ENCODE measurements at regions of chr18 and their contacts with region 1.

Region 1: GRCh38 chr18:12657684-12658425 is at the start of gene SPIRE1:
- DNase-seq: peak; percentile 29
- ATAC-seq: peak; percentile 83
- H3K4me3 ChIP-seq: peak within 1 kb of the TSS; percentile 78 to 86 (median 85)
- H3K27ac ChIP-seq: peak within 1 kb of the TSS; percentile 23
- H3K4me1 ChIP-seq: peaks cover 21% of the 10 kb centered on the region
- H3K27me3 ChIP-seq: no peaks in the 10 kb centered on the region
- CTCF ChIP-seq: peak; percentile 38
- EP300 ChIP-seq: no peak
- POLR2A ChIP-seq: peak in 1 of 2 experiments; percentile 54; a peak in 2 of 4 replicates
- RAD21 ChIP-seq: no peak
- total RNA-seq, gene SPIRE1: 21.3 and 28.1 TPM in 2 replicates

Region 2: DNA sequence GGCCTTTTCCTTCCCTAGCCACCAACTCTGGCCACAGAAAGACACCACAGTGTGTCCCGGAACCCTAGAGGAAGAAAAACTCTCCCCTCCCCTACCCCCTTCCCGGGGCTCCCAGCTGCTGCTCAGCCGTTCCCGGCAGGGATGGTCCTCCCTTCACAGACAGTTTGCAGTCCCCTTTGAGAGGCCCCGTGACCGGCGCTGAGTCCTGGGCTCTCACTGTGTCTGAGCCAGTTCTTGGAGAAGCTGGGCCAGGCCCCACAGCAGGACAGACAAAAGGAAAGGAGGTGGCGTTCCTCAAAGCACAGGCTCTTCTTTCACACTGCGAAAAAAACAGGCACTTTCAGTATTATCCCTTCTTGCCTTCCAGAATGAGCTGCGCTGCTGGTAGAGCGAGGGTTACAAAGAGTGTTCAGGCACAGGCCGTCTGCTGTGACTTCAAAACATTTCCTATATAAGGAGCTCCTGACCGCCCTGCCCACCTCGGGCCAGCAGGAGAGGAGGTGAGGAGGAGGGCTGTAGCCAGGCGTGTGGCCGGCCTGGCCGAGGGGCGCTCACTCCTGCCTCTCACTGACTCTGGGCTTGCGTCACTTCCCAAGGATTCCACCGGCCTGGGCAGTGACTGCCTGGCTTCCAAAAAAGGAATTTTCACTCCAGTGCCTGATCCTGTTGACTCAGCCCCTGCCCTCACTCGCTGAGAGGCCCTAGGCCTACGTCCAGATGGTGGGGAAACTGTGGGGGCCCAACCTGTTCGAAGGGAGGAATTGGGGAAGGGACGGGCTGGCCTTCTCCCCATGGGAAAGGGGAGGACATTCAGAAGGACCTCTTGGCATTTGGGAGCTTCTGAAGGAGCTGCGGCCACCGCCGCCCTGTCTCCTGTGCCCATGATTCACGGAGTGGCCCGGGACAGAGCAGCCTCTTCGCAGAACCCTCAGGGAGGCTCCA is 378.8 kb before region 1 on chr18:
- CTCF ChIA-PET with region 1: no interaction called
- POLR2A ChIA-PET with region 1: no interaction called
- in situ Hi-C with region 1: no loop called
- intact Hi-C with region 1: loop called (anchors 5 kb)
- DNase-seq: peak; percentile 74
- ATAC-seq: peak; percentile 93
- H3K4me3 ChIP-seq: peak overlapping the region; percentile 32 to 61 (median 53)
- H3K27ac ChIP-seq: no peak overlapping the region
- H3K4me1 ChIP-seq: peaks cover 33% of the 10 kb centered on the region
- H3K27me3 ChIP-seq: peaks cover 0 to 14% of the 10 kb centered on the region in 2 experiments; a peak in 1 of 5 replicates
- CTCF ChIP-seq: peak; percentile 26; the same call in 1 of the 2 replicates
- EP300 ChIP-seq: no peak
- POLR2A ChIP-seq: peak in 1 of 2 experiments; percentile 59; a peak in 2 of 4 replicates
- RAD21 ChIP-seq: no peak

Region 3: GRCh38 chr18:12327510-12328178 is 330.2 kb before region 1 on chr18:
- CTCF ChIA-PET with region 1: interaction called, 3 read pairs
- POLR2A ChIA-PET with region 1: no interaction called
- in situ Hi-C with region 1: no loop called
- intact Hi-C with region 1: loop called (anchors 5 kb)
- DNase-seq: peak; percentile 69
- ATAC-seq: peak; percentile 95
- H3K4me3 ChIP-seq: no peak overlapping the region
- H3K27ac ChIP-seq: no peak overlapping the region
- H3K4me1 ChIP-seq: no peaks in the 10 kb centered on the region; the same call in 1 of the 2 replicates
- H3K27me3 ChIP-seq: no peaks in the 10 kb centered on the region
- CTCF ChIP-seq: peak; percentile 85
- EP300 ChIP-seq: no peak
- POLR2A ChIP-seq: no peak
- RAD21 ChIP-seq: peak; percentile 64; the same call in 1 of the 2 replicates

Region 4: DNA sequence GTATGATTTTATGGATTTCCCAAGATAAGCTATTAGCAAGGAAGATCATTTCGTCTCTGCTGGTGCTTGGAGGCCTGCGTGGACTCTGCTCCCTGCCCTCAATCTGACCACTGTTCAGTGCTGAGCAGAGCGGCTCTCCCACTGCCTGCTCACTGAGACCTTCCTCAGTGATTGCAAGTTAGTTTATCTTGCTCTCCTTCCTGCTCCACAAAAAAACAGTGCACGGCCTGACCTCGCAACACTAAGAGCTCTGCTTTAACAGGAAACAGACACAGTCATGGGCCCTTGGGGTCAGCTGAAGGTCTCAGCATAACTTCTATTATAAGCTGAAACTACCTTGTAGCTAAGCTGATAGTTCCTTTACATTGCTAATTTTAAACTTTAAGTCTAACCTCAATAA is 197.0 kb before region 1 on chr18:
- CTCF ChIA-PET with region 1: no interaction called
- POLR2A ChIA-PET with region 1: no interaction called
- in situ Hi-C with region 1: no loop called
- intact Hi-C with region 1: loop called (anchors 5 kb)
- DNase-seq: peak; percentile 67
- ATAC-seq: peak; percentile 100
- H3K4me3 ChIP-seq: peak overlapping the region in 1 of 3 experiments; percentile 4; a peak in 1 of 6 replicates
- H3K27ac ChIP-seq: peak overlapping the region; percentile 57
- H3K4me1 ChIP-seq: peaks cover 24% of the 10 kb centered on the region
- H3K27me3 ChIP-seq: no peaks in the 10 kb centered on the region
- CTCF ChIP-seq: no peak
- EP300 ChIP-seq: no peak
- POLR2A ChIP-seq: no peak
- RAD21 ChIP-seq: no peak

Region 5: GRCh38 chr18:12478269-12479047 is 179.4 kb before region 1 on chr18:
- CTCF ChIA-PET with region 1: no interaction called
- POLR2A ChIA-PET with region 1: no interaction called
- in situ Hi-C with region 1: no loop called
- intact Hi-C with region 1: no loop called
- DNase-seq: no peak
- ATAC-seq: no peak
- H3K4me3 ChIP-seq: no peak overlapping the region
- H3K27ac ChIP-seq: no peak overlapping the region
- H3K4me1 ChIP-seq: no peaks in the 10 kb centered on the region
- H3K27me3 ChIP-seq: no peaks in the 10 kb centered on the region
- CTCF ChIP-seq: no peak
- EP300 ChIP-seq: no peak
- POLR2A ChIP-seq: no peak
- RAD21 ChIP-seq: no peak

Region 6: GRCh38 chr18:12543697-12544096 is 114.2 kb before region 1 on chr18:
- CTCF ChIA-PET with region 1: interaction called, 12 read pairs
- POLR2A ChIA-PET with region 1: no interaction called
- in situ Hi-C with region 1: loop called (anchors 5 kb)
- intact Hi-C with region 1: loop called (anchors 1 kb)
- DNase-seq: no peak
- ATAC-seq: no peak
- H3K4me3 ChIP-seq: no peak overlapping the region
- H3K27ac ChIP-seq: no peak overlapping the region
- H3K4me1 ChIP-seq: no peaks in the 10 kb centered on the region
- H3K27me3 ChIP-seq: no peaks in the 10 kb centered on the region
- CTCF ChIP-seq: no peak
- EP300 ChIP-seq: no peak
- POLR2A ChIP-seq: no peak
- RAD21 ChIP-seq: no peak

Region 7: GRCh38 chr18:12606592-12607315 is 51.1 kb before region 1 on chr18:
- CTCF ChIA-PET with region 1: no interaction called
- POLR2A ChIA-PET with region 1: no interaction called
- in situ Hi-C with region 1: no loop called
- intact Hi-C with region 1: no loop called
- DNase-seq: peak; percentile 38
- ATAC-seq: no peak
- H3K4me3 ChIP-seq: no peak overlapping the region
- H3K27ac ChIP-seq: peak overlapping the region; percentile 42
- H3K4me1 ChIP-seq: peaks cover 56% of the 10 kb centered on the region
- H3K27me3 ChIP-seq: no peaks in the 10 kb centered on the region
- CTCF ChIP-seq: no peak
- EP300 ChIP-seq: peak in 1 of 2 experiments; percentile 50; a peak in 1 of 4 replicates
- POLR2A ChIP-seq: no peak
- RAD21 ChIP-seq: no peak